ENCODE measurements at regions of chr7 and their contacts with region 1.

Region 1: GRCh38 chr7:30026229-30027064 is at the start of gene FKBP14:
- DNase-seq: peak; percentile 94 to 96 (median 95)
- H3K4me3 ChIP-seq: peak within 1 kb of the TSS; percentile 81 to 88 (median 84)
- H3K4me3 Mint-ChIP-seq: peak within 1 kb of the TSS in 1 of 2 donors; percentile 94
- H3K27ac ChIP-seq: peak within 1 kb of the TSS; percentile 80 to 85
- H3K27ac Mint-ChIP-seq: peak within 1 kb of the TSS; percentile 86 to 96 (median 94)
- H3K4me1 ChIP-seq: peaks cover 23 to 32% of the 10 kb centered on the region in 2 donors
- H3K4me1 Mint-ChIP-seq: peaks cover 35% of the 10 kb centered on the region
- H3K27me3 ChIP-seq: no peaks in the 10 kb centered on the region
- H3K27me3 Mint-ChIP-seq: peaks cover 0 to 4% (median 3%) of the 10 kb centered on the region in 3 donors
- CTCF ChIP-seq: no peak
- polyA plus RNA-seq, gene FKBP14: 0.43 to 1.9 (median 1.1) TPM

Region 2: GRCh38 chr7:29988424-29989256 is 37.8 kb before region 1 on chr7:
- intact Hi-C with region 1: loop called (anchors 5 kb)
- DNase-seq: peak; percentile 48 to 79 (median 57)
- H3K4me3 ChIP-seq: peak overlapping the region; percentile 84 to 96 (median 89)
- H3K4me3 Mint-ChIP-seq: peak overlapping the region; percentile 81 to 93
- H3K27ac ChIP-seq: peak overlapping the region; percentile 54 to 76
- H3K27ac Mint-ChIP-seq: peak overlapping the region; percentile 65 to 93 (median 87)
- H3K4me1 ChIP-seq: peaks cover 36 to 47% of the 10 kb centered on the region in 2 donors
- H3K4me1 Mint-ChIP-seq: peaks cover 38% of the 10 kb centered on the region
- H3K27me3 ChIP-seq: peaks cover 0 to 5% of the 10 kb centered on the region in 2 donors
- H3K27me3 Mint-ChIP-seq: peaks cover 5 to 12% (median 8%) of the 10 kb centered on the region in 3 donors
- CTCF ChIP-seq: no peak

Region 3: DNA sequence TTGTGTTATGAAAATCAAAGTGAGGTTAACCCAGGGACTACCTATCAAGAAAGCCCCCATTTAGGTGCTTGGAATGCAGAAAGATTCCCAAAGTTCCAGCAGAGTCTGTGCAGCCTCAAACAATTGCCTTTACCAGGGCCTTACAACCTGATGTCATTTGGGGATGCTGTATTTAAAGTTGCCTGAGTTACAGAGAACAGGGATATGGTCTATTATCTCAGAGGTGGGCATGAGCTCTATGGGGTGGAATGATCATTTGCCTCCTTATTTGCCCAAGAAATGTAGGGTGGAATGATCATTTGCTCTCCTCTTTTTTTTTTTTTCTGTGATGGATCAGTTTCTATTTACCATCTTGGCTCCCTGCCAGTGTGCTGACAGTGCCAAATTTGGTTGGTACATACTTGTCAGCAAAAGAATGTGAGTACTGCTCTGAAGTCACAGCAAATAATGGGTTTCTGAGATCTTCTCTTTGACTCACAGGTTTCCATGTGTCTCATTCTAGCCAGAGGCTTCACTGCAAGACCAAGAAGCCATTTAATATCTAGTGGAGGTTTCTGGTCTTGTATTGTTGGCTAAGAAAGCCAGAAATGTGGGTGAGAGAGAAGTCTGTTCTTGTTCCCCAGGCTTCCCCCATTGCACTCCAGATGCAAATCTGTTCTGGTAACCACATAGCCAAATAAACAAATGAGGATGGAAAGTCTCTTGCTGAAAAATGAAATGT is 212.4 kb after region 1 on chr7:
- intact Hi-C with region 1: loop called in 1 of 2 experiments (anchors 5 kb)
- DNase-seq: peak; percentile 62 to 81 (median 64)
- H3K4me3 ChIP-seq: no peak overlapping the region
- H3K4me3 Mint-ChIP-seq: no peak overlapping the region
- H3K27ac ChIP-seq: peak overlapping the region in 1 of 2 donors; percentile 71
- H3K27ac Mint-ChIP-seq: peak overlapping the region; percentile 35 to 86 (median 81)
- H3K4me1 ChIP-seq: peaks cover 36 to 38% of the 10 kb centered on the region in 2 donors
- H3K4me1 Mint-ChIP-seq: peaks cover 39% of the 10 kb centered on the region
- H3K27me3 ChIP-seq: no peaks in the 10 kb centered on the region
- H3K27me3 Mint-ChIP-seq: peaks cover 4 to 9% (median 7%) of the 10 kb centered on the region in 3 donors
- CTCF ChIP-seq: no peak

Measured in CD14-positive monocyte (primary cell).